Panc1 (cell line): ENCODE measurements at regions of chr10 and their contacts with region 1.

Region 1: DNA sequence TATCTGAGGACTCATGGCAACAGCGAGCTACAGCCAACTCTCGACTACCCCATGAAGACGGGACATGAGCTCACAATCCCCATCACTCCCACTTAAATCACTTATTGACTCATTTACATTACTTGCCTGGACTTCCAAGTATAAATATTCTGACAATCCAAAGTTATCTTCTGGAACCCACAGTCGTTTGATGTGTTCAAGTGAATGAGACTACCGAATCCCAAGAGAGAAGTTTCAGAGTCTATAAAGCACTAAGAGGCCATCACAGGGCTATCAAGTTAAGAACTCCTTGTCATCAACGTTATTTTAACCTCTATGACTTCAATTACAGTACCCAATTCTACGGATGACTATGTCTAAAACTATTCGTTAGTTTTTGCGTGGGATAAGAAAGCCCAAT is 11.5 kb upstream of the ANAPC16 start:
- DNase-seq: no peak
- ATAC-seq: no peak
- H3K4me3 ChIP-seq: no peak overlapping the region
- H3K27ac ChIP-seq: peak overlapping the region; percentile 52
- H3K4me1 ChIP-seq: no peaks in the 10 kb centered on the region
- H3K27me3 ChIP-seq: no peaks in the 10 kb centered on the region
- CTCF ChIP-seq: no peak

Region 2: GRCh38 chr10:72126184-72126871 is 78.0 kb before region 1 on chr10:
- CTCF ChIA-PET with region 1: no interaction called
- POLR2A ChIA-PET with region 1: no interaction called
- in situ Hi-C with region 1: no loop called
- intact Hi-C with region 1: loop called (anchors 10 kb)
- DNase-seq: no peak
- ATAC-seq: no peak; the same call in 1 of the 2 replicates
- H3K4me3 ChIP-seq: no peak overlapping the region
- H3K27ac ChIP-seq: peak overlapping the region; percentile 63
- H3K4me1 ChIP-seq: peaks cover 43% of the 10 kb centered on the region
- H3K27me3 ChIP-seq: no peaks in the 10 kb centered on the region
- CTCF ChIP-seq: peak; percentile 66